ENCODE measurements at regions of chr7 and their contacts with region 1.

Region 1: GRCh38 chr7:140640727-140641523 is at the start of gene DENND2A:
- DNase-seq: no peak
- H3K4me3 ChIP-seq: peak within 1 kb of the TSS; percentile 66
- H3K27me3 ChIP-seq: no peaks in the 10 kb centered on the region
- CTCF ChIP-seq: no peak
- polyA plus RNA-seq, gene DENND2A: 2.9 and 3.3 TPM in 2 replicates

Region 2: DNA sequence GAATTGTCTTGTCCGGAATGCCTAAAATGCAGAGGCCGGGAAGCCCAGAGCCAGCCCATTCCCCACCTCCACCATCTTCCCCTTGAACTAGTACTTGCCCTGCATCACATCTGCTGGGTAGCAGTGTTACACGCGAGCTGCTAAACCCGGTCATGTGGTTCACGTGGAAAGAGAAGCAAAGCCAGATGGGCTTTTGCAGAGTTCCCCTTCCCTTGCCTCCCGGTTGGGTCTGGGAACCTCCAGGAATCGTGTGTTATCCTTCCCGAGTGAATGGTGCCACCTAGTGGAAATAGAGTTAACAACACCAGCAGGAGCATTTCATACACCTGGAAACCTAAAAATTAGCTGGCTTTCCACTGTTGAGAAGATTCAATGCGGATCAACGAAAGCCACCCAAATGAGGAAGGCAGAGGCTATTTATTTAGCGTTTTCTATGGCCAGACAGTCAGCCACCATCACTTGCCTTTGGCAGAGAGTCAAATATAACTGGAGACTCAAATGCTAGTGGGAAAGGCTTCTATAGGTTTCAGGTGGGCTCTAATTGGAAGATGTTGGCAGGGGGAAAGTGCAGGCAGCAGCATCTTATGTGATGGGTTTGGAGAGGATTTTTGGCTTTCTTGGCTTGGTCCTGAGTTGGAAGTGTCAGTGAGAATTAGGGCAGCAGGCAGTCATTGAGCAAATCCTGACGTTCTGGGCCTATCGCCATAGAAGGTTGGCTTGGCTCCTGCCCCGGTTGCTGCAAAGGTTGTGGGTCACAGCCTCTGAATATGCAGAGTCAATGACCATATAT is 12.6 kb after region 1 on chr7:
- CTCF ChIA-PET with region 1: interaction called, 13 read pairs
- POLR2A ChIA-PET with region 1: no interaction called
- DNase-seq: no peak
- H3K4me3 ChIP-seq: no peak overlapping the region
- H3K27me3 ChIP-seq: no peaks in the 10 kb centered on the region
- CTCF ChIP-seq: peak; percentile 84